Activated CD4-positive, alpha-beta memory T cell treated with anti-CD3 and anti-CD28 coated beads, Interleukin-2, amount 10 ng/mL, durations not matched to agents 7 days and 5 days (primary cell): ENCODE measurements at regions of chr15 and their contacts with region 1.

Region 1: DNA sequence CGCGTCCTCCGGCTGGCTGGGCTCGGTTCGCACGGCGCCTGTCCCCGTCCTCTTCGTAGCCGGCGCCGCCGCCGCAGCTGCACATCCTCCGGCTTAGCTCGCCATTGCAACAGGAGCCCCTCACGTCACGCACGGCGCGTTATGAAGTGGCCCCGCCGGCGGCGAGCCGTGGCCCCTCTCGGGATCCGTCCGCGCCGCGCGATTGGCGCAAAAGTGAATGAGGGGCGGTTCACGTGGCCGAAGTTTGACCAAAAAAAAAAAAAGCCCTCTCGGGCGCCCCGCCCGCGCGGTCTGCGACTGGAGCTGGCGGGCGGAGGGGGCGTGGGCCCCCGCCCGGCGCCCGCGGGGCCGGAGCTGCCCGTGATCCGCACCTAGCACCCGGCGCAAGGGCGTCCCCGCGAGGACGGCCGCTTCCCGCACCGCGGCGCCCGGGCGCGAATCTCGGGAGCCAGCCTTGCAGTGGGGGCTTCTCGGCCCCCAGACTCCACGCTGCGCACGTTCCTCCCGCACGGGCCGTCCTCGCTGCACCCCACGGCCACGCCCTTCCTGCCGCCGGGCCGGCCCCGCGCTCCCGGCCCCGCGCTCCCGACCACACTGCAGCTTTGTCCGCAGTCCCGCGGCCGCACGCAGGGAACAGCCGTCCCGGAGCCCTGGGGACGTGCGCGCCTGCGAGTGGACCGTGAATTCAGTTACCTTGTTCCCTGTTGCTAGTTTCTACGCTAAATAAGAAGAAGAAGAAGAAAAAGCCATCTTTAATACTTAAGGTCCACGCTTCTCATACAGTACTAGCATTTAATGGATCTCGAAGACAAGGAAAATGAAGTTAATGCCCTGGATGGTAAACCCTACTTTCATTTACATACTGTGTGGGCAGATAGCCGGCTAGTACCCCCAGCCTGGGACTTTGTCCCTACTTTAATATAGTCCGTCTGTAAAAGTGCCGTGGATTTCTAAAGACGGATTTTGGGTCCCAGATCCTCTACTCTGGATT is at the start of gene CHSY1:
- DNase-seq: peak; percentile 90
- H3K4me3 Mint-ChIP-seq: peak within 1 kb of the TSS; percentile 95
- H3K27ac Mint-ChIP-seq: peak within 1 kb of the TSS; percentile 86
- H3K4me1 Mint-ChIP-seq: peaks cover 70% of the 10 kb centered on the region
- H3K27me3 Mint-ChIP-seq: no peaks in the 10 kb centered on the region
- total RNA-seq, gene CHSY1: 61.7 to 62.0 TPM

Region 2: DNA sequence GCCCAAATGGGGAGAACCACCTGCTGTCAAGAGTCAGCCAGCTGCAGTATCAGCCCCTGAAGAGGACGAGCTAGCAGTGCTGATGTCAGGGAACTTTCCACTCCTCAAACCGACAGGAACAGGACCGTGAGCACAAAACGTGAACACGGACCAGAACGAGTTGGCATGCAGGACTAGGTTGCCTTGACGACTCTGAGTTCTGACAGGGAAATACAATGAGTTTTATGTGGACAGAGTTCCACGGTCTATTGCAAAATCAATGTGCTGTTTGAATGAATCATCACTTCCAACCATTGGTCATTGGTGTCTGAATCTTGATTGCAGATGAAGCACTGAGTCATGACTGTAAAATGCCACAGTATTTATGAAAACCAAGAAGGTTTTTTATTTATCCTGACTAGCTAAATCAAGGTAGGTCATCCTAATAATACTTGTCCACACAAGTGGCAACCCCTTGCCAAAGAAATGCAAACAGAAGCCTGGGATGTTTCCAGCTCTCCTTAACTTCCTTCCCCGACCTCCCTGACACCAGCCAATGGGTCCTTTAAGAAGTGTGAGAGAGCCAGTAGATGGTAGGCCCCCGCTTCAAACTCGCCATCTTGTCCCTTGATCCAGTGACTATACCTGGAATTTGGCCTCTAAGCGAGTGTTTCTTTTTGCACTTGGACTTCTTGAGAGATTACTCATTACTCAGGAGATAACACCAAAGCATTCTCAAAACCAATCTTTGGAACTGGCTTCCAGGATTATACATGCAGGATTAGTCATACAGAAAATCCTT is 530.2 kb before region 1 on chr15:
- CTCF ChIA-PET with region 1: no interaction called
- POLR2A ChIA-PET with region 1: no interaction called
- DNase-seq: peak; percentile 7
- H3K4me3 Mint-ChIP-seq: no peak overlapping the region
- H3K27ac Mint-ChIP-seq: no peak overlapping the region
- H3K4me1 Mint-ChIP-seq: no peaks in the 10 kb centered on the region
- H3K27me3 Mint-ChIP-seq: peaks cover 4% of the 10 kb centered on the region

Region 3: GRCh38 chr15:101088788-101089583 is 163.1 kb before region 1 on chr15:
- CTCF ChIA-PET with region 1: interaction called, 81 read pairs
- POLR2A ChIA-PET with region 1: interaction called, 8 read pairs
- DNase-seq: peak; percentile 81
- H3K4me3 Mint-ChIP-seq: no peak overlapping the region
- H3K27ac Mint-ChIP-seq: peak overlapping the region; percentile 16
- H3K4me1 Mint-ChIP-seq: peaks cover 17% of the 10 kb centered on the region
- H3K27me3 Mint-ChIP-seq: peaks cover 5% of the 10 kb centered on the region

Region 4: DNA sequence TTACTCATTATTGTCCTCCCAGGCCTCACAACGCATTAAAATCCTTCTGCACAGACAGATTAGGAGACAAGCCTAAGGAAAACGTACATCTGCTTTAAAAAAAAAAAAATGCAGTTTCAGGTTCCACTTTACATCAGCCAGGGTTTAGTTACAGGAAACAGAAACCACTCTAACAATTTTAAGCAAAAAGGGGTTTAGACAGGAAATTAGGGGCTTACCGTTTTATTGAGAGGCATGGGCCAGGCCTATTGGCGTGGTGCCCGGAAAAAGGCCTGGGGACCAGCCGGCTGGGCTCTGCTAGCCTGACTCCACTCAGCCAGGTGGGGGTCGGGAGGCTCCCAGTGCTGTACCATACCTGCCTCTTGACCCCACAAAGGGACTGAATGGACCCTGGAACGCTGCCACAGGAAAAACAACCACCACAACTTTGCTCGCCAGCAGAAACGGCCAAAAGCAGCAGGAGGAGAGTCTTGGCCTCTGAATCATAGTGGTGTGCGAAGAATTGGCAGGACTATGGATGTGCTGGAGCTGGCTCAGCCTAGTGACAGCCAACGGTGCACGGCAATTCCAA is 124.5 kb before region 1 on chr15:
- CTCF ChIA-PET with region 1: interaction called, 15 read pairs
- POLR2A ChIA-PET with region 1: interaction called, 8 read pairs
- DNase-seq: peak; percentile 53
- H3K4me3 Mint-ChIP-seq: peak overlapping the region; percentile 66
- H3K27ac Mint-ChIP-seq: peak overlapping the region; percentile 95
- H3K4me1 Mint-ChIP-seq: peaks cover 65% of the 10 kb centered on the region
- H3K27me3 Mint-ChIP-seq: peaks cover 8% of the 10 kb centered on the region

Region 5: DNA sequence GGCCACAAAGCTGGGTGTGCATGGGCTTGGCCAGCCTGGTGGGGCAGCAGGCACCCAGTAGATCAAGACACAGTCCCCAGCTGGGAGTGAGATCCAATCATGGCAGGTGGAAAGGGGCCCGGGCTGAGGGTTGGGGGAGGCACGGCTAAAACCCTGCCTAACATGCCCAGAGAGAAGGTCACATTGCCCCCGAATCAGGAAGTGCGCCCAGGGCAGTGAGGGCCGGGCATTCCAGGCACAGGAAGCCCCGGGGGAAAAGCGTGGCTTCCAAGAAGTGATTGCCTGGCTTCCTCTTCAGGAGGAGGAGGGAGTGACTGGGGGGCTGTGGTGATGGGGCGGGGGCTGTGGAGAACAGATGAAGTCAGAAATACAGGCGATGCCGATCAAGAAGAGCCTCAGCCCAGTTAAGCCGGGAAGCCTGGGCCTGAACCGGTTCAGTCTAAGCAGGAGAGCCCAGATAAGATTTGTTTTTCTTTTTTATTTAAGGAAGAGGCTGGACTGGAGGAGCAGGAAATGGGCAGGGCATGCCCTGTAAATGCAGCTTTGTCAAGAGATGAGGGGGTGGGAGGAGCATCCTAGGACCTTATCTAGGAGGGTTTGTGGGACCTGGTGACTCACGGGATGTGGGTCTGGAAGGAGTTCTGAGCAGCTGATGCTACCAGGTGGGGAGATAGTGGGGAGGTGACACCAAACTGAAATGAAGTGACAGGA is 84.2 kb before region 1 on chr15:
- CTCF ChIA-PET with region 1: interaction called, 6 read pairs
- POLR2A ChIA-PET with region 1: interaction called, 13 read pairs
- DNase-seq: peak; percentile 90
- H3K4me3 Mint-ChIP-seq: peak overlapping the region; percentile 68
- H3K27ac Mint-ChIP-seq: peak overlapping the region; percentile 94
- H3K4me1 Mint-ChIP-seq: peaks cover 49% of the 10 kb centered on the region
- H3K27me3 Mint-ChIP-seq: no peaks in the 10 kb centered on the region

Region 6: GRCh38 chr15:101201406-101202174 is 50.5 kb before region 1 on chr15:
- CTCF ChIA-PET with region 1: interaction called, 9 read pairs
- POLR2A ChIA-PET with region 1: interaction called, 16 read pairs
- DNase-seq: peak; percentile 36
- H3K4me3 Mint-ChIP-seq: no peak overlapping the region
- H3K27ac Mint-ChIP-seq: peak overlapping the region; percentile 99
- H3K4me1 Mint-ChIP-seq: peaks cover 89% of the 10 kb centered on the region
- H3K27me3 Mint-ChIP-seq: no peaks in the 10 kb centered on the region